ENCODE measurements at regions of chr12 and their contacts with region 1.

Region 1: DNA sequence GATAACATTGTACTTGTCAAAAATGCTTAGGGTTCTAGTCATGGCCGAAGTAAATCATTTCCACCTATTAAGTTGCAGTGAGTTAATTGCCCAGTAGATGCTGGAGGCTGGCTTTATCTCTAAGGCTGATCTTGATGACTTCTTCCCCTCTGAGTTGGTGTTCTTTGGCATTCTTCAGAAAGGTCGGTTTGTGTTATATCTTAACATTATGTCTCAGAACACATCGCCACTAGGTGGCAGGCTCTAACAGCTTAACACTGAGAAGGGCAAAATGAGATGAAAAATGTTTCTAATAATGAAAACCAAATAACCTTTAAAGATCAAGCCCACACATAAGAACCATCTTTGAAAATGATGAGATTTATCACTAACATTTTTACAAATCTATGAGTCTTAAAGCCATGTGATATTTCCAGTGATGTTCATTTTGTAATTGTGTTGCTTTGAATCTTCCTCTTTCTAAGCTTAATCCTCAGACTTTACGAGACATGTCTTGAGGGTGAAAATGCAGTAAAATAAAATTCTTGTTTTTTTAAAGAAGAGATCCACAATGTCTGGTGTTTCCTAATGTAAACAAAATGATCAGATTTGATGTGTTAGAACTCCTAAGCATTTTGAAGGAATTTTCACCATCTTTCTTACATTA is 28.6 kb downstream of the SUDS3 start:
- DNase-seq: peak; percentile 42 to 74 (median 72)
- ATAC-seq: peak; percentile 85
- H3K4me3 ChIP-seq: no peak overlapping the region
- H3K27ac ChIP-seq: no peak overlapping the region
- H3K4me1 ChIP-seq: peaks cover 5% of the 10 kb centered on the region in 2 experiments; a peak in 3 of 5 replicates
- H3K27me3 ChIP-seq: no peaks in the 10 kb centered on the region
- CTCF ChIP-seq: peak; percentile 57 to 81 (median 71)
- EP300 ChIP-seq: no peak
- POLR2A ChIP-seq: no peak
- RAD21 ChIP-seq: peak; percentile 53 to 76

Region 2: DNA sequence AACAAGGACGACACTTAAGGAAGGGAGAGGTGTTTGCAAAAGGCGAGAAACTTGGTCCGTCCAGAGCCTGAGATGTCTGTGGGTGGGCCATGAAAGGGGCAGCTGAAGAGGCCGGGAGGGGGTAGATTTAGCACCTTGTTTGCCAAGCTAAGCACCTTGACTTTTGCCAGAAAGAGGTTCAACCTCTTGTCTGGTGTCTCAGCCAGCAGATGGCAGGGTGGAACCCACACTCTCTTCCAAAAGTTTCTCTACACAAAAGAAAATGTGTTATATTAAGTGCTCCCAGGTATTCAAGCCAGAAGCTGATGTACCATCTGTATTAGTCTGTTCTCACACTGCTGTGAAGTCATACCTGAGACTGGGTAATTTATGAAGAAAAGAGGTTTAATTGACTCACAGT is 41.2 kb after region 1 on chr12:
- CTCF ChIA-PET with region 1: no interaction called
- POLR2A ChIA-PET with region 1: no interaction called
- in situ Hi-C with region 1: no loop called
- intact Hi-C with region 1: no loop called
- DNase-seq: no peak
- ATAC-seq: no peak
- H3K4me3 ChIP-seq: no peak overlapping the region
- H3K27ac ChIP-seq: no peak overlapping the region
- H3K4me1 ChIP-seq: no peaks in the 10 kb centered on the region
- H3K27me3 ChIP-seq: no peaks in the 10 kb centered on the region
- CTCF ChIP-seq: no peak
- EP300 ChIP-seq: no peak
- POLR2A ChIP-seq: no peak
- RAD21 ChIP-seq: peak in 1 of 2 experiments; percentile 16; a peak in 1 of 4 replicates

Region 3: DNA sequence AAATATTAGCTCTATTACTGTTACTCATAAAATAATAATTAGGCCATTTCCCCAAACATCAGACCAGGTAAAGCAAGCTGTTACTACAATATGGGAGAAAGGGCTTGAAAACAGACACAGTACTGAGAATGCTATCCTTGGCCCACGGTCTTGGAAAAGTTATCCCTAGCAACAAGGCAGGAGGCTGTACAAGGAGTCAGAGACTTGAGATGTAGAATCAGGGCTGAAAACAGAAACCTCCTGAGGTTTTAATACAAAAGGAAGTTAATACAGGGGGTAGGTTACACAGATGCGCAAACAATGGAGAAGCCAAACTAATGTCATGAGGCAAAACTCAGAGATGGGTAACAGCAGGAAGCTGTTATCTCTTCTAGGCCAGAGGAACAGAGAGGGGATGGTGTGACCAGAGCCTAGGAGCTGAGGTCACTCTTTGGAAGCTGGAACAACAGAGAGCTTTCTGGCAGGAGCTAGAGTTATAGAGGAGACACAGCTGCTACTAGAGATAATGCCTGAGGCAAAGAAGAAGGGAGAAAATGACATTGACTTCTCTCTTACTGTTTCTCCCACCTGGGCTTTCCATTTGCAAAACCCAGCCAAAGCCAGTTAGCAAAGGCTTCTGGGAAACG is 220.2 kb after region 1 on chr12:
- CTCF ChIA-PET with region 1: no interaction called
- POLR2A ChIA-PET with region 1: interaction called, 4 read pairs
- in situ Hi-C with region 1: loop called (anchors 10 kb)
- intact Hi-C with region 1: loop called (anchors 10 kb)
- DNase-seq: peak; percentile 11 to 70 (median 32)
- ATAC-seq: peak; percentile 92
- H3K4me3 ChIP-seq: no peak overlapping the region
- H3K27ac ChIP-seq: peak overlapping the region; percentile 34; the same call in 2 of the 3 replicates
- H3K4me1 ChIP-seq: peaks cover 0 to 8% of the 10 kb centered on the region in 2 experiments; a peak in 3 of 5 replicates
- H3K27me3 ChIP-seq: no peaks in the 10 kb centered on the region
- CTCF ChIP-seq: no peak
- EP300 ChIP-seq: peak; percentile 21; the same call in 1 of the 2 replicates
- POLR2A ChIP-seq: no peak
- RAD21 ChIP-seq: no peak

Region 4: DNA sequence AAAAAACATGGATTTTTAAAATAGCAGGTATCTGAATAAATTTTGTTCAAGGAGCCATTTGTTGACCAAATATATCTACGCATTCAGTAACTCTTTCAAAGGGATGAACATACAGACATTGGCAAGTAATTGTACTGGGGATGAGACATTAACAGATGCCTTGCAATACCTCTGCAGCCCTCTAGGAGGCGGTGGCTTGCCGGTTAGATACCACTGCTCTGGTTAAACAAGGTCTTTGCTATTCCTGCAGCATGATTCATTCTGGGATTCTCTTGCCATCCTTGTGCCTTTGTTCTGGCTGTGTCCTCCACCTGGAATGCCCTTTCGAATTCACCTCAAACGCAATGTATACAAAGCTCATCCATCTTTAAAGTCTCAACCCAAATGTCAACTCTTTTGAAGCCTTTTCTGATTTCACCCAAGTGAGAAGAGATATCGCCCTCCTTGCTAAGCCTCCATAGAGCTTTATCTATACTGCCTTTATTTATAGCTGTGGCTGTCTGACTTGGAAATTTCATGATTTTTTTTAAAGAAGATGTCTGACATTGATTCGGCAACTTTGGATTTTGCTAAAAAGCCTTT is 445.3 kb after region 1 on chr12:
- CTCF ChIA-PET with region 1: no interaction called
- POLR2A ChIA-PET with region 1: no interaction called
- in situ Hi-C with region 1: no loop called
- intact Hi-C with region 1: loop called (anchors 10 kb)
- DNase-seq: peak; percentile 59 to 77 (median 68)
- ATAC-seq: peak; percentile 80
- H3K4me3 ChIP-seq: no peak overlapping the region
- H3K27ac ChIP-seq: no peak overlapping the region
- H3K4me1 ChIP-seq: no peaks in the 10 kb centered on the region
- H3K27me3 ChIP-seq: no peaks in the 10 kb centered on the region
- CTCF ChIP-seq: peak; percentile 71 to 89 (median 77)
- EP300 ChIP-seq: no peak
- POLR2A ChIP-seq: no peak
- RAD21 ChIP-seq: peak in 1 of 2 experiments; percentile 52; a peak in 3 of 4 replicates

Region 5: DNA sequence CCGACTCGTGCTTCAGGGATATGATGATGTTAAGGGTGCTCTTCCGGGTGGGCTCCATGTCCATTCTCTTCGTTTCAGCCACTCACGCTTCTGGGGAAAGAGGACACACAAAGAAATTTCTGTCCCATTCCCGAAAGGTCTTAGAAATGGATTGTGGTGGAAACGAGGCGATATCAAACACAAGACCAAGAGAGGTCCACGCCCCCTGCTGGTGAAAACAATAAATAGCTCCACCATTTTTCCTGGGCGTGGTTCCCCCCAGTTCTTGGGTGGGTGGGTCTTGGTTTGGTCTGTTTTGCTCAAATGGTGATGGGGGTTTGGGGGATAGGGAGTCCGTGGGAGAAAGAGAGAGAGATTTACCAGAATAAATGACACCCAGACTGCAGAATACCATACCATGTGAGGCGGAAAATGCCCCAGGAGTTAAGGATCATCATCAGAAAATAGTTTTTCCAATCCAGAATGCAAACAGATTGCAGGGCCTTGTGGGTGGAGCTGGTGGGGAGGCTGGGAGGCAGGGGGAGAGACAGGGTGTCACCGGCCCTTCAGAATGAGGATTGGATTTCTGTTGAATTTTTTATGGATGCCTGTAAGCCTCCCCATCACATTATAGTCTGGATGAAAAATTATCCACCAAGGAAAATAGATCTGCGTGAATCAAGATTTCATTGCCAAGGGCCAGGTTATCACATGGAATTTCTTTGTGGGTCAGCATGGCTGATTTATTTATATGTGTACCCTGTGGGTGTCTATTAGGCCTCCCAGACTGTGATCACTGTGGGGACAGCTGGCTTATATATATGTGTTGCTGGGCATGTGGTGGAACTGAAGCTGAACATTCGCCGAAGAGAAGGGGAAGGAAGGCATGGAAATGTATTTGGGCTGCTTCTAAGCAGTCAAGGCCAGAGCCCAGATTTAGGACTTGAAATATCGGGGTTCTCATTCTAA is 632.2 kb after region 1 on chr12:
- CTCF ChIA-PET with region 1: interaction called, 3 read pairs
- POLR2A ChIA-PET with region 1: no interaction called
- in situ Hi-C with region 1: no loop called
- intact Hi-C with region 1: loop called (anchors 10 kb)
- DNase-seq: peak; percentile 57 to 77 (median 68)
- ATAC-seq: peak; percentile 59; the same call in 1 of the 3 replicates
- H3K4me3 ChIP-seq: no peak overlapping the region
- H3K27ac ChIP-seq: no peak overlapping the region
- H3K4me1 ChIP-seq: no peaks in the 10 kb centered on the region
- H3K27me3 ChIP-seq: no peaks in the 10 kb centered on the region; a peak in 1 of 5 replicates
- CTCF ChIP-seq: peak; percentile 68 to 78 (median 72)
- EP300 ChIP-seq: no peak
- POLR2A ChIP-seq: no peak
- RAD21 ChIP-seq: peak; percentile 23 to 55; a peak in 3 of 4 replicates

Region 6: DNA sequence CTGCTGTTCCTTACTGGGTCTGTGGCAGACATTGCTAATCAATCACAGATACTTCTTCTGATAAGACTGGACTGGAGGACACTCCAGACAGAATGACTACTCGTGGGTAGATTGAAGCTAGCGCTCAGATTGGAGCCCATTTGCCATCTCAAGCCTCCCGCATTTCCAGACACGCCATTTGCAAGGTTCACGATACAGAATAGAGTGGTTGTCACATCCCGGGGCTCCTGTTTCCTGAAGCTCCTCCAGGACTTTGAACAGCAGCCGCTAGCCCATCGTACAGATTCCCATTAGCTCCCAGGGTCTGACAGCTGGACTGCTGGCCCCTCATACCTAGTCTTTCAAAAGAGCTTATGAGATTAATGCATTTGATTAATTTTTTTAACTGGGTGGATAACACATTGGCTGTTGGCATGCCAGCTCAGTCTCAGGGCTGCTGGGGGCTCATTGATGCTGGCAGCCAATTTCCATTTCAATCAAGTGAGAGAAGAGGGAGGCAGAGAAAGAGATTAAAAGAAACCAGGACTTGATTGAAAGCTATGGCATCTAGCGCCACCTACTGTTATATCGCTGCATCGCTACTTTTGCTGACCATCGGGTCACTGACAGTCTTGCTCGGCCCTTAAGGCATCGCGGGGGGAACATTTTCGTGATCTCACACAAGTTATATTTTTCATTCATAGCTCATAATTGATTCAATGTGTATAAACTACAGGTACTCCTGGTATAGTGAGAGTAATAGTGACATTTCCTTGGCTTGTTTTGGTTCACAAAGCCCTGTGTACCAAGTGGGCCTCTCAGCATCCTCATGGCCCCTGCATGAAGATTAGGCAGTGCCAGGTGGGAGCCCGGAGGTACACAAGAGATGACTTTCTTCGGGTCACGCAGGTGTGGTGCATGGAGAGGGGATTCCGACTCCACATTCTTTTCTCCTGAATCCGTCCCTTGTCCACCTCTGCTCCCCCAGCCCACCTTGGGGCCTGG is 1008.1 kb after region 1 on chr12:
- CTCF ChIA-PET with region 1: no interaction called
- POLR2A ChIA-PET with region 1: no interaction called
- in situ Hi-C with region 1: no loop called
- intact Hi-C with region 1: loop called (anchors 5 kb)
- DNase-seq: peak; percentile 65 to 75 (median 73)
- ATAC-seq: peak; percentile 79
- H3K4me3 ChIP-seq: no peak overlapping the region
- H3K27ac ChIP-seq: no peak overlapping the region
- H3K4me1 ChIP-seq: no peaks in the 10 kb centered on the region
- H3K27me3 ChIP-seq: peaks cover 0 to 5% of the 10 kb centered on the region in 2 experiments; a peak in 2 of 5 replicates
- CTCF ChIP-seq: peak; percentile 76 to 87 (median 85)
- EP300 ChIP-seq: no peak
- POLR2A ChIP-seq: no peak
- RAD21 ChIP-seq: peak; percentile 51 to 77

Measured in K562 (cell line).